Thyroid gland (tissue), 4 donors: ENCODE measurements at regions of chr15 and their contacts with region 1.

Region 1: GRCh38 chr15:89647191-89647851 is 7.9 kb downstream of the KIF7 start:
- DNase-seq: peak; percentile 78 to 80
- H3K4me3 ChIP-seq: no peak overlapping the region
- H3K27ac ChIP-seq: no peak overlapping the region
- H3K4me1 ChIP-seq: peaks cover 0 to 4% of the 10 kb centered on the region in 2 donors
- H3K27me3 ChIP-seq: no peaks in the 10 kb centered on the region
- CTCF ChIP-seq: peak; percentile 61 to 84 (median 76)
- POLR2A ChIP-seq: no peak

Region 2: GRCh38 chr15:89221543-89221942 is 425.8 kb before region 1 on chr15 and contains the start of gene RLBP1:
- intact Hi-C with region 1: no loop called
- DNase-seq: no peak
- H3K4me3 ChIP-seq: no peak within 1 kb of the TSS
- H3K27ac ChIP-seq: no peak within 1 kb of the TSS
- H3K4me1 ChIP-seq: no peaks in the 10 kb centered on the region
- H3K27me3 ChIP-seq: no peaks in the 10 kb centered on the region
- CTCF ChIP-seq: no peak
- POLR2A ChIP-seq: no peak
- total RNA-seq, gene RLBP1: not detected

Region 3: DNA sequence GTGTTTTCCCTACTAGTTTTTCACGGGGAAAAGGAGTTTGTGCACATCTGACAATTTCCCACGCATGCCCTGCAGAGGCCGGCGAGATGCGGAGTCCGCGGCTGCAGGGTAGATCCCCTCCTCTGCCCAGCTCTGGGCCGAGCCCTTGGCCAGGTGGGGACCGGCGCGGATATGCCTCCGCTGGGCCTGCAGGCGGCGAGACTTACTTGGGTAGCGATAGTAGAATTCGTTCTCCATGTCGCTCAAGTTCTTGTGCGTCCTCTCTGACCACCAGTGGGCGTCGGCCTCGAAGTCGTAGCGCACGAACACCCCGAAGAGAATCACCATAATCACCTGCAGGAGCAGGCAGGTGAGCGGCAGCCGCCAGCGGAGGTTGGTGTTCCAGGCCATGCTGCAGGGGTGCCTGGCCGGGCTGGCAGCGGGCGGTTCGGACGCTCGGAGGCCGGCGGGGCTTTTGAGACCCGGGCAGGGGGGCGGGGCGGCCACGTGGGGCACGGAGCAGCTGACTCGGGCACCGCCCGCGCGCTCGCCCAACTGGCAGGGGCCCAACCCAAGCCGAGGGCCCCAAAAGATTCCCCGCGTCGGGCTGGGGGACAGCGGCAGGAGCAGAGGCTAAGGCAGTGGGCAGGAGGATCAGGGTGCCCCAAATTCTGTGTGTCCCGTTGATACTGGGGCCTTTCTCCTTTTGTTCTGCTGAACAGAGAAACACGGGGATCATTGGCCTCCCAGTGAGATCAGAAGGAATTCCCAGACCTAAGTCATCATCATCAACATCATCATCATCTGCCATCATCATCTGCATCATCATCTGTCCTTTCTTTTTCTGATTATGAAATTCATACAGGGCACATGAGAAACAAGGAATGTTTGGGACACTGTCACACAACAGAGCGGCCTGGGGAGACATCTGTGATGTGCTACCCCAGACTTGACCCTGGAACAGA is 150.9 kb before region 1 on chr15 and contains the start of gene RHCG:
- intact Hi-C with region 1: no loop called
- DNase-seq: peak; percentile 4 to 11
- H3K4me3 ChIP-seq: no peak within 1 kb of the TSS
- H3K27ac ChIP-seq: no peak within 1 kb of the TSS
- H3K4me1 ChIP-seq: no peaks in the 10 kb centered on the region
- H3K27me3 ChIP-seq: no peaks in the 10 kb centered on the region
- CTCF ChIP-seq: no peak
- POLR2A ChIP-seq: no peak
- total RNA-seq, gene RHCG: not detected

Region 4: GRCh38 chr15:89740137-89740536 is 92.8 kb after region 1 on chr15:
- intact Hi-C with region 1: loop called (anchors 10 kb)
- DNase-seq: peak; percentile 52 to 54
- H3K4me3 ChIP-seq: no peak overlapping the region
- H3K27ac ChIP-seq: no peak overlapping the region
- H3K4me1 ChIP-seq: no peaks in the 10 kb centered on the region
- H3K27me3 ChIP-seq: no peaks in the 10 kb centered on the region
- CTCF ChIP-seq: peak; percentile 90 to 98 (median 94)
- POLR2A ChIP-seq: no peak